A549 (cell line): ENCODE measurements at regions of chr4 and their contacts with region 1.

Region 1: DNA sequence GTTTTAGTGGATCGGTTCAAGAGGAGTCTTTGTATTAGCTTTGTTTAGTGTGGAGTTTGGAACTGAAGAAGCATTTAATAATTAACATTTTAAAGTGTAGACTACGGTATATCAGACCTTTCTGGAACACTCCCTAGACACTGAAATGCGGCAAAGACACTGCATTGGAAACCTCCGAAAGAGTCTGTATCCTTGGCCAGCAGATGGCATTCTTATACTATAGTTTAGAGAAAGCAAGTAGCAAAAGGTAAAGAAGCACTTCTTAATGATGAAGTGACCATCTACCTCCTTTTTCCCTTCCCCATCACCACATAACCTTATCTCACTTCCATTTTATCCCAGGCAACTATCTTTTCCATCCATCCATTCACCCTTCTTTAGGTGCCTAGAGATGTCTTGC is 7.6 kb downstream of the FABP2 start:
- DNase-seq: peak in 1 of 2 experiments; percentile 39
- ATAC-seq: peak; percentile 85 to 89; a peak in 5 of 6 replicates
- H3K4me3 ChIP-seq: no peak overlapping the region
- H3K27ac ChIP-seq: no peak overlapping the region
- H3K4me1 ChIP-seq: no peaks in the 10 kb centered on the region
- CTCF ChIP-seq: peak; percentile 64
- EP300 ChIP-seq: no peak
- POLR2A ChIP-seq: no peak
- RAD21 ChIP-seq: peak; percentile 74 to 75

Region 2: DNA sequence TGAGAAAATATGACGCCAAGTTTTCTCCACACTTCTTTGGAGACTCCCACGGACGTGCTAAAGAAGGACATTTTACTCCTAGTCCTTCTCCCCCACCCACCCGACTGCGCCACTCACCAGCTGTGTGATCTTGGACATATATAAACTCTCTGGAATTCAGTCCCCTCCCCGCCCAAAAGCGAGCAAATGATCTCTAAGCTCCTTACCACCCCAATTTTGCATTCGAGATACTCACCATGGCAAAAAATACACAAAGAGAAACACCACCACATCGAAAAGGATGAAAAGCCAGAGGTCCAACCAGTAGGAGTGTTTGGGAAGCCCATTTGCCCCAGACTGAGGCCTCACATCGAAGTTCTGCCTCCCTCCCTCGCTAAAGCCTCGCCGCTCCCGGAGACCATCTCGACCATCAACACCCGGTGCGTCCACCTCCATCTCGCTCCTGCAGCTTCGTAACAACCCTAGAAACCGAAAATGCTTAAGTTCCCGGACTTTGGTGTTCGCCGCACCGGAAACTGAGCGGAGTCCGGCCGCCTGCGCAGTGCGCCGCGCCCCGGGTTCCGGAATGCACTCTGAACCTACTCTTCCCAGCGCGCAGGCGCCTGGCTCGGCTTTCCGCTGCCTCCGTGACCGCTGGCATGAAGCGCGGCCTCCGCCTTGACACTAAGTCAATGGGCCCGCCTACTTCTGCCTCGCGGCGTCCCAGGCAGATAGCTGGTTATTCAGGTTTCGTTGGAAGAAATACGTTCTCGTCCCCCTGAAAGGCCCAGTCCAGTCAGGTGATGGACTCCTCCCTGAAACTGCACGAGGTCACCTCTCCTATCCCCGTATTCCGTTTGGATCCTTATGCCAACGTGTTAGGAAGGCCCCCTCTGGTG is 14.0 kb before region 1 on chr4:
- CTCF ChIA-PET with region 1: interaction called, 12 read pairs
- POLR2A ChIA-PET with region 1: no interaction called
- DNase-seq: peak; percentile 66 to 93
- ATAC-seq: peak; percentile 96 to 98
- H3K4me3 ChIP-seq: peak overlapping the region; percentile 89
- H3K27ac ChIP-seq: peak overlapping the region; percentile 88 to 91
- H3K4me1 ChIP-seq: peaks cover 13% of the 10 kb centered on the region; the same call in 2 of the 3 replicates
- CTCF ChIP-seq: no peak
- EP300 ChIP-seq: no peak
- POLR2A ChIP-seq: peak; percentile 12
- RAD21 ChIP-seq: no peak

Region 3: DNA sequence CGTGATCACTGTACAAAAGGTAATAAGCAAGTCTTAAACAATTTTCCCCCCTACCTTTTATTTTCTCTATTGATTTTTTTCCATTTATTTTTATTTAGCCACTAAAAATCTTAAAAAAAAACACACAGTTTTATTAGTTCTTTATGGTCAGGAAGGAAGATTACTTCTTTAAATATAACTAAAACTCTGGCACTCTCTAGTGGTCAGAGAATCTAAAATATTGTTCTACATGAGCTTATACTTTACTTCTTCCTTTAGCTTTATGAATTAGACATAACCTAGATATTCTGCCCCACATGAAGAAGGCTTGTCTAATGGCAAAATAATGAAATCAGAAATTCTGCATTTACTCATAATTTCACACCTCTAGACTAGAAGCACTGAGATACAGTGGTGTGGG is 179.1 kb after region 1 on chr4:
- CTCF ChIA-PET with region 1: interaction called, 11 read pairs
- POLR2A ChIA-PET with region 1: no interaction called
- DNase-seq: peak in 1 of 2 experiments; percentile 2
- ATAC-seq: no peak
- H3K4me3 ChIP-seq: no peak overlapping the region
- H3K27ac ChIP-seq: no peak overlapping the region
- H3K4me1 ChIP-seq: no peaks in the 10 kb centered on the region
- CTCF ChIP-seq: peak; percentile 25; the same call in 2 of the 3 replicates
- EP300 ChIP-seq: no peak
- POLR2A ChIP-seq: no peak
- RAD21 ChIP-seq: peak; percentile 10 to 39; a peak in 2 of 5 replicates